Vagina (tissue), 2 donors: ENCODE measurements at regions of chr14 and their contacts with region 1.

Region 1: DNA sequence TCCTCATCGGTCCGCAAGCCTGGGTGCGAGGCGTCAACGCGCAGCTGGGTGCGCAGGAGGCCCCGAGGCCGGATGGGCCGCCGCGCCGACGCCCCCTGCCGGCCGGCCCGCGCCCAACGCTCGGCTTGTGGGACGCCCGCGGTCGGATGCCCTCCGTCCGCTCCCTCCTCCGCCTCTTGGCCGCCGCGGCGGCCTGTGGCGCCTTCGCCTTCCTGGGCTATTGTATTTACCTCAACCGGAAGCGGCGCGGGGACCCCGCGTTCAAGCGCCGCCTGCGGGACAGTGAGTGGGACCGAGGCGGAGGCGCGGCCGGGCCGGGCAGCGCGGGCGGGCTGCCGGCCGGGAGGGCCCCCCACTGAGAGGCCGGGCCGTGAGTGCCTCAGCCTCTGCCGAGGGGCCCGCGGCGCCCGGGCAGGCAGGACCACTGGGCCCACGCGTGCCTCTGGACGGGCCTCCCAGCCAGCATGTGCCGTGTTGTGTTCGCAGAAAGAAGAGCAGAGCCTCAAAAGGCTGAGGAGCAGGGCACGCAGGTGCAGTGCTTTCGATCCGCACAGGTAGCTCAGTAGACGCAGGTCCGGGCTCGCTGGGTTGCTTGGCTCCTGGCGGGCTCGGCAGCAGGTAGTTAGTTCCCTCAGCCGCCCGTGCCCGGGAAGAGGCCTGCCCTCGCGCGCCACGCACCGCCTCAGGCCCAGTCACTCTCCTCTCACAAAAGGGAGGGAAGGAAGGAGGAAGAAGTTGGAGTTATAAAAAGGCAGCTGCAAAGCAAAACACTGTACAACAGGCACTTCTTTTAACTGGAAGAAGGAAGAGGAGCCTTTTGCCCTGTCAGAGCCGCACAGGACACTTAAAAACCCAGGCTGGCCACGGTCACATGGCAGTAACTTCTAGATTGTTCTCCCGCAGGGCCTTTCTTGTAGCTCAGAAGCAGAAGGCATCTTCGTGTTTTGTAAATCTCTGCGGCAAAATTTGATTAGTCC is at the start of gene TOMM20L:
- DNase-seq: no peak
- H3K4me3 ChIP-seq: peak within 1 kb of the TSS; percentile 60 to 65
- H3K27ac ChIP-seq: peak within 1 kb of the TSS; percentile 81
- H3K4me1 ChIP-seq: peaks cover 14% of the 10 kb centered on the region
- H3K27me3 ChIP-seq: no peaks in the 10 kb centered on the region
- CTCF ChIP-seq: peak; percentile 53 to 96 (median 77)
- POLR2A ChIP-seq: no peak
- total RNA-seq, gene TOMM20L: not detected

Region 2: DNA sequence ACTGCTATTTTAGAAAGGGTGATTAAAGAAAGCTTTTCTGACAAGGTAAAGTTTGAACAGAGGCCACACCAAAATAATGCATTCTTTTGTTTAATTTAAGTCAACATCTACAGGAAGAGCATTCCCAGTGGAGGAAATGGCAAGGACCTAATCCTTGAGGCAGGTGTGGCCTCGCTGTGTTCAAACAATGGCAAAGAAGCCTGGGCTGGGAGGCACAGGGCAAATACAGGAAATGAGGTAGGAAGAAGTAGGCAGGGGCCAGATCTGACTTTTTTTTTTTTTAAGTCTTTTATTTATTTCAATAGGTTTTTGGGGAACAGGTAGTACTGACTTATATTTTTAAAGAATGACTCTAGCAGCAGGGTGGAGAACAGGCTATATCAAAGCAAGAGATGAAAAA is 297.6 kb before region 1 on chr14:
- intact Hi-C with region 1: loop called (anchors 10 kb)
- DNase-seq: no peak
- H3K4me3 ChIP-seq: no peak overlapping the region
- H3K27ac ChIP-seq: no peak overlapping the region
- H3K4me1 ChIP-seq: no peaks in the 10 kb centered on the region
- H3K27me3 ChIP-seq: no peaks in the 10 kb centered on the region
- CTCF ChIP-seq: no peak
- POLR2A ChIP-seq: no peak

Region 3: GRCh38 chr14:58131386-58131785 is 264.7 kb before region 1 on chr14:
- intact Hi-C with region 1: no loop called
- DNase-seq: no peak
- H3K4me3 ChIP-seq: no peak overlapping the region
- H3K27ac ChIP-seq: no peak overlapping the region
- H3K4me1 ChIP-seq: no peaks in the 10 kb centered on the region
- H3K27me3 ChIP-seq: no peaks in the 10 kb centered on the region
- CTCF ChIP-seq: no peak
- POLR2A ChIP-seq: no peak

Region 4: DNA sequence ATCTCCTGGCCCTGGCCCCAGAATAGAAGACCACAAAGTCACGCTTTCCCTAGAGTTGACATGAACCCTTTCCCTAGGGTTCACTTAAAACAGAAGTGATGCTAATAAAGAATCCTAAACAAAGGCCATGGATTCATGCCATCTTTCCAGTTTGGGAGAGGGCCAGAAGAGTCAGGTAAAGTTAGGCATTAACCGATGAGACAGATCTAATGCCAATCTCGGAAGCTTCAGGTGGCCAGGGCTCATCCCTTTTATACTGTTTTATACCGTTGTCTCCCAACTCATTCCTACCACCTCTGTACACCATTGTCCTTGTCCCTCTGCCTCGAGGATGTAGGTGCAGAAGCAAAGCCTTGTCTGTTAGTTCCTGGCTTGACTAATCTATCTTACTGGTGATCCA is 219.0 kb before region 1 on chr14:
- intact Hi-C with region 1: no loop called
- DNase-seq: no peak
- H3K4me3 ChIP-seq: no peak overlapping the region
- H3K27ac ChIP-seq: no peak overlapping the region
- H3K4me1 ChIP-seq: no peaks in the 10 kb centered on the region
- H3K27me3 ChIP-seq: no peaks in the 10 kb centered on the region
- CTCF ChIP-seq: no peak
- POLR2A ChIP-seq: no peak